Naive thymus-derived CD4-positive, alpha-beta T cell (primary cell): ENCODE measurements at regions of chr19 and their contacts with region 1.

Region 1: GRCh38 chr19:39412100-39412866 is at the start of gene PLEKHG2:
- DNase-seq: peak; percentile 95 to 99 (median 99)
- ATAC-seq: peak; percentile 72
- H3K4me3 ChIP-seq: peak within 1 kb of the TSS; percentile 82
- H3K4me3 Mint-ChIP-seq: peak within 1 kb of the TSS; percentile 84 to 99 (median 92)
- H3K27ac ChIP-seq: peak within 1 kb of the TSS; percentile 100
- H3K27ac Mint-ChIP-seq: peak within 1 kb of the TSS; percentile 90 to 100 (median 97)
- H3K4me1 ChIP-seq: peaks cover 24 to 28% of the 10 kb centered on the region in 2 donors
- H3K4me1 Mint-ChIP-seq: peaks cover 24 to 49% (median 35%) of the 10 kb centered on the region in 7 donors
- H3K27me3 ChIP-seq: no peaks in the 10 kb centered on the region
- H3K27me3 Mint-ChIP-seq: peaks cover 0 to 3% (median 0%) of the 10 kb centered on the region in 5 donors
- total RNA-seq, gene PLEKHG2: 16.4 to 205 (median 58.2) TPM

Region 2: GRCh38 chr19:39064405-39064804 is 347.9 kb before region 1 on chr19:
- CTCF ChIA-PET with region 1: no interaction called
- POLR2A ChIA-PET with region 1: no interaction called
- intact Hi-C with region 1: no loop called
- DNase-seq: no peak
- ATAC-seq: no peak
- H3K4me3 ChIP-seq: no peak overlapping the region
- H3K4me3 Mint-ChIP-seq: no peak overlapping the region
- H3K27ac ChIP-seq: no peak overlapping the region
- H3K27ac Mint-ChIP-seq: no peak overlapping the region
- H3K4me1 ChIP-seq: no peaks in the 10 kb centered on the region
- H3K4me1 Mint-ChIP-seq: peaks cover 0 to 9% (median 6%) of the 10 kb centered on the region in 7 donors
- H3K27me3 ChIP-seq: no peaks in the 10 kb centered on the region
- H3K27me3 Mint-ChIP-seq: peaks cover 0 to 6% (median 0%) of the 10 kb centered on the region in 5 donors

Region 3: DNA sequence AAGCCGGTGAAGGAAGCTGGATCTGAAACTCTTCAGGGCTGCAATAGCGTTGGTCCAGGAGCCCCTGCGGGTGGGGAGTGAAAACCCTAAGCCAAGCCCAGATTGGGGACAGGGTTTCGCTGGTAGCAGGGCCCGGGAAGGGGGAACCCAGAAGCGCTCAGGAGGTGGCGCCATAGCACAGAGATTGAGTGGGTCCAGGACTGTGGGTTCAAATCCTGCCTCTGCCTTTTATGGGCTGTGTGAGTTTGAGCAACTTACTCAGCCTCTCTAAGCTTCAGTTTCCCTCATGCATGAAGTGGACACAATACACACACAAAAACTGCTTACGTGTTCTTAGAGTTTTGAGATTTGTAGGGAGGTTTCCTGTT is 199.9 kb before region 1 on chr19:
- CTCF ChIA-PET with region 1: no interaction called
- POLR2A ChIA-PET with region 1: no interaction called
- intact Hi-C with region 1: loop called (anchors 1 kb)
- DNase-seq: peak in 8 of 9 donors; percentile 24 to 58 (median 46)
- ATAC-seq: peak; percentile 80
- H3K4me3 ChIP-seq: no peak overlapping the region
- H3K4me3 Mint-ChIP-seq: no peak overlapping the region
- H3K27ac ChIP-seq: no peak overlapping the region
- H3K27ac Mint-ChIP-seq: no peak overlapping the region
- H3K4me1 ChIP-seq: no peaks in the 10 kb centered on the region
- H3K4me1 Mint-ChIP-seq: no peaks in the 10 kb centered on the region
- H3K27me3 ChIP-seq: no peaks in the 10 kb centered on the region
- H3K27me3 Mint-ChIP-seq: peaks cover 0 to 13% (median 5%) of the 10 kb centered on the region in 5 donors

Region 4: GRCh38 chr19:39335168-39335548 is 77.1 kb before region 1 on chr19:
- CTCF ChIA-PET with region 1: no interaction called
- POLR2A ChIA-PET with region 1: interaction called, 17 read pairs
- intact Hi-C with region 1: no loop called
- DNase-seq: peak in 5 of 9 donors; percentile 24 to 50 (median 40)
- ATAC-seq: peak; percentile 44
- H3K4me3 ChIP-seq: peak overlapping the region; percentile 97
- H3K4me3 Mint-ChIP-seq: peak overlapping the region; percentile 98 to 100 (median 100)
- H3K27ac ChIP-seq: peak overlapping the region; percentile 94
- H3K27ac Mint-ChIP-seq: peak overlapping the region; percentile 94 to 100 (median 99)
- H3K4me1 ChIP-seq: peaks cover 29 to 58% of the 10 kb centered on the region in 2 donors
- H3K4me1 Mint-ChIP-seq: peaks cover 49 to 80% (median 56%) of the 10 kb centered on the region in 7 donors
- H3K27me3 ChIP-seq: no peaks in the 10 kb centered on the region
- H3K27me3 Mint-ChIP-seq: no peaks in the 10 kb centered on the region

Region 5: DNA sequence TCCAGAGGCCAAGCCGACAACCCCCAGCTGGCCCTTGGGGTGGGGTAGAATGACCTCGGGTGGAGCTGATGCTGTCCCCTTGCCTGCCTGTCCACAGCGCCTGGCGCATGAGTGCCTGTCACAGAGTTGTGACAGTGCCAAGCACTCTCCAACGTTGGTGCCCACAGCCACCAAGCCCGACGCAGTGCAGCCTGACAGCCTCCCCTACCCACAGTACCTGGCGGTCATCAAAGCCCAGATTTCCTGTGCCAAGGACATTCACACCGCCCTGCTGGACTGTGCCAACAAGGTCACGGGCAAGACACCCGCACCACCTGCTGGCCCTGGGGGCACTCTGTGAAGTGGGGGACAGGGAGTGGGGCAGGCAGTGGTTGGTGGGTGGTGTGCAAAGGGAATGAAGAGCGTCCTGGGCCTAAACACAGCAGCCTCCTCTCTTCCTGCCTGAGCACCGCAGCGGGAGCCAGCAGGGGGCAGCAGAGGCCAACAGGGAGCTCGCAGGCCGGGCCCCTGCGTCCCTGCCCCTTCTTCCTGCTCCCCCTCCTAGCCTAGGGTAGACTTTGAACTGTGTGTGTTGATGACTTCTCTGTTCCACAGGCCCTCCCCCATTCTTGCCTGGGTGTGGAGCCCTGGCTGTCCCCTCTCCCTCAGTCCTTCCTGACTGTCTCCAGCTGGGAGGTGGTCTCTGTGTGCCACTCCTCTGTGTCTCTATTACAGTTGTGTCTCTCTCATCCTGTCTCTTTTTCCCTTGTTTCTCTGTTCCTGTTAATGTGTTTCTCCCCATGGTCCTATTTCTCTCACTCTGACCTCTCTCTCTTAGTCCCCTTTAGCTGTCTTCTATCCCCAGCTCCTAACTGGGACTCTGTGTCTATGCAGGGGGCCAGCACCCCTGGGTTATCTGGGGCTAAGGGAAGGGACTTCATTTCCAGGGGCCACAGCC is 14.7 kb before region 1 on chr19:
- CTCF ChIA-PET with region 1: interaction called, 121 read pairs
- POLR2A ChIA-PET with region 1: interaction called, 250 read pairs
- intact Hi-C with region 1: loop called (anchors 1 kb)
- DNase-seq: peak; percentile 88 to 97 (median 93)
- ATAC-seq: peak; percentile 71
- H3K4me3 ChIP-seq: peak overlapping the region; percentile 57
- H3K4me3 Mint-ChIP-seq: peak overlapping the region in 9 of 10 donors; percentile 48 to 80 (median 74)
- H3K27ac ChIP-seq: peak overlapping the region; percentile 63
- H3K27ac Mint-ChIP-seq: peak overlapping the region; percentile 84 to 96 (median 93)
- H3K4me1 ChIP-seq: peaks cover 39 to 42% of the 10 kb centered on the region in 2 donors
- H3K4me1 Mint-ChIP-seq: peaks cover 27 to 68% (median 56%) of the 10 kb centered on the region in 7 donors
- H3K27me3 ChIP-seq: no peaks in the 10 kb centered on the region
- H3K27me3 Mint-ChIP-seq: no peaks in the 10 kb centered on the region

Region 6: GRCh38 chr19:39435499-39436349 is 23.4 kb after region 1 on chr19 and contains the start of gene RPS16:
- CTCF ChIA-PET with region 1: interaction called, 7 read pairs
- POLR2A ChIA-PET with region 1: interaction called, 41 read pairs
- intact Hi-C with region 1: loop called (anchors 1 kb)
- DNase-seq: peak; percentile 93 to 100 (median 98)
- ATAC-seq: peak; percentile 98
- H3K4me3 ChIP-seq: peak within 1 kb of the TSS; percentile 98
- H3K4me3 Mint-ChIP-seq: peak within 1 kb of the TSS; percentile 92 to 100 (median 98)
- H3K27ac ChIP-seq: peak within 1 kb of the TSS; percentile 97
- H3K27ac Mint-ChIP-seq: peak within 1 kb of the TSS; percentile 95 to 100 (median 99)
- H3K4me1 ChIP-seq: peaks cover 27% of the 10 kb centered on the region in 2 donors
- H3K4me1 Mint-ChIP-seq: peaks cover 20 to 53% (median 40%) of the 10 kb centered on the region in 7 donors
- H3K27me3 ChIP-seq: no peaks in the 10 kb centered on the region
- H3K27me3 Mint-ChIP-seq: peaks cover 0 to 5% (median 0%) of the 10 kb centered on the region in 5 donors
- total RNA-seq, gene RPS16: 2,281 to 4,335 (median 4,063) TPM

Region 7: DNA sequence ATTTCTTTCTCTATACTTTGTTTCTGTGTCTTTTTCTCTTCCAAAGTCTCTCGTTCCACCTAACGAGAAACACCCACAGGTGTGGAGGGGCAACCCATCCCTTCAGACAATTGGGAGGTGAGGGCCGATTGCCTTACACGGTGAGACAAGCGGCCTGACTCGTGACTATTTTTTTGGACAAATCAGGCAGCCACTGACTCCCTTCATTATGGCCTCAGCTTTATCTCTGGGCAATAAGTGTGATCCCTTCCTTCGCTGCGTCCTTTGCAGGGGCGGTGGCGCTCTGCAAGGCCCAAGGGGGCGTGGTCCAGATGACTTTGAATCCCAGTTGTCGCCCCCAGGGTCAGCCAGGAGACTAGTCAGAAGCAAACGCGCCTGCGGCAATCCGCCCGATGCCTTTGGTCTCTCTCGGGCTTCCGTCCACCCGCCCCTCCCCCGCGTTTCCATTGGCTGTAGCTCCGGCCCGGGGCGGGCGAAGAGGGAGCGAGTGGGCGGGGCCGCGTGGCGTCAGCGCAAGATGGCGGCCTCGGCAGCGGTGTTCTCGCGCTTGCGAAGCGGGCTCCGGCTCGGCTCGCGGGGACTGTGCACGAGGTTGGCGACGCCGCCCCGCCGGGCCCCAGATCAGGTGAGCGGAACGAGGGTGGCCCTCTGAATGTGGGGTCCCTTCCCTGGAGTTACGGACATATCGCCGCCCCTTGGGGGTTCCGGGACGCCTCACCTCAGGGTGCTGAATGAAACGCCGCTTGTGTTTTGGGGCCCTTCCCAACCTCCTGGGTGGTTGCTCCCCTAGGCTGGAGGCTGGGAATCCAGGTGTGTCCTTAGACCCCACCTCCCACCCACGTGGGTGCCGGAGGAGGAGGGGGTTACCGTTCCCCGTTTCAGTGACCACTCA is 68.3 kb after region 1 on chr19 and contains the start of gene TIMM50:
- CTCF ChIA-PET with region 1: no interaction called
- POLR2A ChIA-PET with region 1: interaction called, 4 read pairs
- intact Hi-C with region 1: loop called in 1 of 2 experiments (anchors 2 kb)
- DNase-seq: peak; percentile 93 to 98 (median 95)
- ATAC-seq: peak; percentile 100
- H3K4me3 ChIP-seq: peak within 1 kb of the TSS; percentile 74
- H3K4me3 Mint-ChIP-seq: peak within 1 kb of the TSS; percentile 86 to 97 (median 92)
- H3K27ac ChIP-seq: peak within 1 kb of the TSS; percentile 86
- H3K27ac Mint-ChIP-seq: peak within 1 kb of the TSS; percentile 80 to 97 (median 93)
- H3K4me1 ChIP-seq: peaks cover 10 to 11% of the 10 kb centered on the region in 2 donors
- H3K4me1 Mint-ChIP-seq: peaks cover 14 to 32% (median 25%) of the 10 kb centered on the region in 7 donors
- H3K27me3 ChIP-seq: no peaks in the 10 kb centered on the region
- H3K27me3 Mint-ChIP-seq: no peaks in the 10 kb centered on the region
- total RNA-seq, gene TIMM50: 43.5 to 70.0 (median 50.0) TPM